ENCODE measurements at regions of chr13 and their contacts with region 1.

Region 1: DNA sequence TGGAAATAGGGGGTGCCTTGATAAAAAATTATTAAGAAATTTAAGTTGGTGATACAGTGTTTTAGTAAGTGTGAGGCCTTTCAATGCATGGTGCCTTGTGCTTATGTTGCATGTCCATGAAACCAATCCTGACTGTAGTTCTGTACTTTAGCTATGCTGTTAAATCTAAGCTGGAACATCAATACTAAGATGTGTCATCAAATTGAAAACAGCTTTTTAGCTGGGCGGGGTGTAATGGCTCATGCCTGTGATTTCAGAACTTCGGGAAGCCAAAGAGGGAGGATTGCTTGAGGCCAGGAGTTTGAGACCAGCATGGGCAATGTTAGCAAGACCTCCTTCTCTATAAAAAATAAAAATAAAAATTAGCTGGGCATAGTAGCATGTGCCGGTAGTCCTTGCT is 930.3 kb upstream of the PCDH9 start:
- DNase-seq: no peak
- H3K4me3 ChIP-seq: no peak overlapping the region
- H3K27ac ChIP-seq: no peak overlapping the region
- H3K4me1 ChIP-seq: no peaks in the 10 kb centered on the region
- H3K27me3 ChIP-seq: no peaks in the 10 kb centered on the region
- CTCF ChIP-seq: no peak
- EP300 ChIP-seq: no peak
- POLR2A ChIP-seq: no peak

Region 2: GRCh38 chr13:67943116-67943515 is 217.3 kb before region 1 on chr13:
- in situ Hi-C with region 1: no loop called
- intact Hi-C with region 1: no loop called
- DNase-seq: no peak
- H3K4me3 ChIP-seq: no peak overlapping the region
- H3K27ac ChIP-seq: no peak overlapping the region
- H3K4me1 ChIP-seq: no peaks in the 10 kb centered on the region
- H3K27me3 ChIP-seq: no peaks in the 10 kb centered on the region
- CTCF ChIP-seq: no peak
- EP300 ChIP-seq: no peak
- POLR2A ChIP-seq: no peak

Region 3: GRCh38 chr13:68124437-68125086 is 35.9 kb before region 1 on chr13:
- in situ Hi-C with region 1: no loop called
- intact Hi-C with region 1: loop called (anchors 1 kb)
- DNase-seq: no peak
- H3K4me3 ChIP-seq: no peak overlapping the region
- H3K27ac ChIP-seq: no peak overlapping the region
- H3K4me1 ChIP-seq: no peaks in the 10 kb centered on the region
- H3K27me3 ChIP-seq: no peaks in the 10 kb centered on the region
- CTCF ChIP-seq: no peak
- EP300 ChIP-seq: no peak
- POLR2A ChIP-seq: no peak

Measured in transverse colon (tissue), 4 donors.